ENCODE measurements at regions of chr1 and their contacts with region 1.

Region 1: GRCh38 chr1:167687919-167688519 is 33.8 kb upstream of the MPZL1 start:
- DNase-seq: peak; percentile 76
- H3K4me3 ChIP-seq: no peak overlapping the region; a peak in 1 of 4 replicates
- H3K27ac ChIP-seq: no peak overlapping the region
- H3K4me1 ChIP-seq: peaks cover 8 to 17% of the 10 kb centered on the region in 2 experiments; a peak in 3 of 4 replicates
- H3K27me3 ChIP-seq: no peaks in the 10 kb centered on the region
- CTCF ChIP-seq: peak; percentile 95
- EP300 ChIP-seq: no peak
- RAD21 ChIP-seq: peak; percentile 96

Region 2: GRCh38 chr1:167548059-167548932 is 139.7 kb before region 1 on chr1:
- CTCF ChIA-PET with region 1: interaction called, 11 read pairs
- POLR2A ChIA-PET with region 1: no interaction called
- DNase-seq: no peak
- H3K4me3 ChIP-seq: no peak overlapping the region
- H3K27ac ChIP-seq: no peak overlapping the region
- H3K4me1 ChIP-seq: peaks cover 0 to 4% of the 10 kb centered on the region in 2 experiments; a peak in 1 of 4 replicates
- H3K27me3 ChIP-seq: no peaks in the 10 kb centered on the region
- CTCF ChIP-seq: no peak
- EP300 ChIP-seq: no peak
- RAD21 ChIP-seq: no peak

Region 3: DNA sequence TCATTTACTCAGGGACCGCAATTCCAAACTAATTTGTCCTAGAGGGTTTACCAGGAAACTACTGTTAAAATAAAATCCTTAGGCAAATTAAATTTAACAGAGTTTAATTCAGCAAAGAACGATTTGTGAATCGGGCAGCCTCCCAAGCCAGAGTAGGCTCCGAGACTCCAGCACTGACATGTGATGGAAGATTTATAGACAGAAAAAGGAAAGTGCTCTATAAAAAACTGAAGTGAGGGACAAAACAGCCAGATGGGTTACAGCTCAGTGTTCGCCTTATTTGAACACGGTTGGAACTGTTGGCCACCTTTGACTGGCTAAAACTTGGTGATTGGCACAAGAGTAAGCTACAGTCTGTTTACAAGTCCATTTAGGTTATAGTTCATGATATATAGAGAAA is 93.2 kb before region 1 on chr1:
- CTCF ChIA-PET with region 1: interaction called, 80 read pairs
- POLR2A ChIA-PET with region 1: interaction called, 3 read pairs
- DNase-seq: no peak
- H3K4me3 ChIP-seq: no peak overlapping the region
- H3K27ac ChIP-seq: no peak overlapping the region
- H3K4me1 ChIP-seq: no peaks in the 10 kb centered on the region; a peak in 1 of 4 replicates
- H3K27me3 ChIP-seq: peaks cover 3% of the 10 kb centered on the region; the same call in 1 of the 2 replicates
- CTCF ChIP-seq: no peak
- EP300 ChIP-seq: no peak
- RAD21 ChIP-seq: no peak

Region 4: DNA sequence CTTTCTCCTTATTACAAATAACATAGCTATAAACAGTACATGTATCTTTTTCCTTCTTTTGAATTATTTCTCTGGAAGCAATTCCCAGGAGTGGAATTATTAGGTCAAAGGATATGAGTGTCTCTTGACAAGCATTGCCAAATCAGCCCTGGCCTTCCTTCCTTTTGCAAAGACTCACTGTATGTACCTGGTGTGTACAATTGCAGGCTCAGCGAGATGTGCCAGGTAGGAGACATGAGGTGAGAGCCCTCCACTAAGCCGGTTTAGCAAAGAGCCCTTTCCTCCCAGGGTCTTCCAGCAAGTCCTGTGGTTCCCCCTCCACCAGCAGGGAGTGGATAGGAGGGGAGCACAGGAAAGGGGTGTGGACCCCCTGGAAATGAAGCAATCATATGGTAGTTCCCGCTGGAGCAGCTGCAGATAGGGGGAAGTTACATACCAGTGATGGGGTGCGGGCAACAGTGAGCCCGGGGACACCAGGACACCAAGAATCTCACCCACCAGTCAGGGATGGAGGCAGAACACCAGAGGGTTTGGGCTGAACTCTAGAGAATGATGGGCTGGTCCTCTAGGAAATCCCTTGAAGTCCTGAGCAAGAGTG is 39.7 kb before region 1 on chr1:
- CTCF ChIA-PET with region 1: interaction called, 11 read pairs
- POLR2A ChIA-PET with region 1: no interaction called
- DNase-seq: no peak
- H3K4me3 ChIP-seq: no peak overlapping the region
- H3K27ac ChIP-seq: no peak overlapping the region
- H3K4me1 ChIP-seq: peaks cover 0 to 2% of the 10 kb centered on the region in 2 experiments; a peak in 1 of 4 replicates
- H3K27me3 ChIP-seq: no peaks in the 10 kb centered on the region
- CTCF ChIP-seq: no peak
- EP300 ChIP-seq: no peak
- RAD21 ChIP-seq: no peak

Region 5: GRCh38 chr1:167708940-167709389 is 20.9 kb after region 1 on chr1:
- CTCF ChIA-PET with region 1: interaction called, 22 read pairs
- POLR2A ChIA-PET with region 1: no interaction called
- DNase-seq: no peak
- H3K4me3 ChIP-seq: no peak overlapping the region
- H3K27ac ChIP-seq: no peak overlapping the region
- H3K4me1 ChIP-seq: peaks cover 0 to 5% of the 10 kb centered on the region in 2 experiments; a peak in 1 of 4 replicates
- H3K27me3 ChIP-seq: peaks cover 13% of the 10 kb centered on the region; the same call in 1 of the 2 replicates
- CTCF ChIP-seq: no peak
- EP300 ChIP-seq: no peak
- RAD21 ChIP-seq: no peak

Measured in SK-N-SH (cell line).